CD8-positive, alpha-beta T cell (primary cell): ENCODE measurements at regions of chr1 and their contacts with region 1.

Region 1: GRCh38 chr1:207963427-207964194 is 52.7 kb upstream of the CD34 start:
- DNase-seq: peak; percentile 67 to 93 (median 82)
- ATAC-seq: peak; percentile 91
- H3K4me3 ChIP-seq: peak overlapping the region; percentile 71 to 92
- H3K4me3 Mint-ChIP-seq: peak overlapping the region; percentile 85
- H3K27ac ChIP-seq: peak overlapping the region; percentile 28 to 73
- H3K27ac Mint-ChIP-seq: peak overlapping the region; percentile 55
- H3K4me1 ChIP-seq: peaks cover 8% of the 10 kb centered on the region
- H3K4me1 Mint-ChIP-seq: peaks cover 12% of the 10 kb centered on the region
- H3K27me3 ChIP-seq: peaks cover 4 to 12% of the 10 kb centered on the region in 2 experiments
- H3K27me3 Mint-ChIP-seq: peaks cover 17% of the 10 kb centered on the region
- CTCF ChIP-seq: peak; percentile 99

Region 2: GRCh38 chr1:207811920-207812720 is 151.5 kb before region 1 on chr1:
- CTCF ChIA-PET with region 1: interaction called, 12 read pairs
- POLR2A ChIA-PET with region 1: no interaction called
- intact Hi-C with region 1: no loop called
- DNase-seq: peak in 2 of 9 experiments; percentile 9 to 46
- ATAC-seq: no peak
- H3K4me3 ChIP-seq: no peak overlapping the region
- H3K4me3 Mint-ChIP-seq: no peak overlapping the region
- H3K27ac ChIP-seq: no peak overlapping the region
- H3K27ac Mint-ChIP-seq: peak overlapping the region; percentile 69
- H3K4me1 ChIP-seq: peaks cover 41% of the 10 kb centered on the region
- H3K4me1 Mint-ChIP-seq: peaks cover 76% of the 10 kb centered on the region
- H3K27me3 ChIP-seq: no peaks in the 10 kb centered on the region
- H3K27me3 Mint-ChIP-seq: no peaks in the 10 kb centered on the region
- CTCF ChIP-seq: no peak

Region 3: GRCh38 chr1:207868774-207869721 is 94.6 kb before region 1 on chr1:
- CTCF ChIA-PET with region 1: interaction called, 14 read pairs
- POLR2A ChIA-PET with region 1: interaction called, 5 read pairs
- intact Hi-C with region 1: no loop called
- DNase-seq: peak; percentile 56 to 90 (median 68)
- ATAC-seq: peak; percentile 68
- H3K4me3 ChIP-seq: peak overlapping the region; percentile 66 to 87
- H3K4me3 Mint-ChIP-seq: peak overlapping the region; percentile 94
- H3K27ac ChIP-seq: peak overlapping the region; percentile 72 to 84
- H3K27ac Mint-ChIP-seq: peak overlapping the region; percentile 96
- H3K4me1 ChIP-seq: peaks cover 80% of the 10 kb centered on the region
- H3K4me1 Mint-ChIP-seq: peaks cover 90% of the 10 kb centered on the region
- H3K27me3 ChIP-seq: no peaks in the 10 kb centered on the region
- H3K27me3 Mint-ChIP-seq: no peaks in the 10 kb centered on the region
- CTCF ChIP-seq: peak; percentile 83

Region 4: GRCh38 chr1:207897188-207897587 is 66.4 kb before region 1 on chr1:
- CTCF ChIA-PET with region 1: interaction called, 12 read pairs
- POLR2A ChIA-PET with region 1: no interaction called
- intact Hi-C with region 1: loop called in 1 of 2 experiments (anchors 2 kb)
- DNase-seq: no peak
- ATAC-seq: no peak
- H3K4me3 ChIP-seq: no peak overlapping the region
- H3K4me3 Mint-ChIP-seq: no peak overlapping the region
- H3K27ac ChIP-seq: no peak overlapping the region
- H3K27ac Mint-ChIP-seq: no peak overlapping the region
- H3K4me1 ChIP-seq: no peaks in the 10 kb centered on the region
- H3K4me1 Mint-ChIP-seq: no peaks in the 10 kb centered on the region
- H3K27me3 ChIP-seq: no peaks in the 10 kb centered on the region
- H3K27me3 Mint-ChIP-seq: no peaks in the 10 kb centered on the region
- CTCF ChIP-seq: no peak

Region 5: DNA sequence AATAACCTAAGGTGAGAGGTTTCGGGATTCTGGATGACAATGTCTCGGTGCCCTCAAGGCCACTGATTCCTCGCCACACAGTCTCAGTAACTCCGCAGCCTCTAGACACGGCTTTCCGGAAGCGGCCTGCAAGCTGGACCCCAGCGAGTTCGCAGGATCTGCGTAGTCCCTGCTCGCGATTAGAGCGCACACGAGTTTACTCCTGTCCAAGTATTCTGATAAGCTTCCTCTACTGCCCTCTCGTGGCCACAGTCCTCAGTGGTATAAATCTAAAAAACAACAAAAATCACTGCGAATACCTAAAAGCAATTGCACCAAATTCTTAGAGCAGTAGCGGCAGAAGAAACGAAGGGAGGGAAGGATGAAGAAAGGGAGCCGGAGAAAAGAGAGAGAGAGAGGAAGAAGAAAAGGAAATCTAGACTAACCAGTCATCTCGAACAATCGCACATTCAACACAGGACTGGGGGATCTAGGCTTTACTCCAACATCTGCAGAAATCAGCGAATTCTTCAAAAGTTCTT is 281.6 kb after region 1 on chr1:
- CTCF ChIA-PET with region 1: no interaction called
- POLR2A ChIA-PET with region 1: no interaction called
- intact Hi-C with region 1: loop called in 1 of 2 experiments (anchors 1 kb)
- DNase-seq: peak; percentile 61 to 87 (median 77)
- ATAC-seq: peak; percentile 56
- H3K4me3 ChIP-seq: peak overlapping the region; percentile 71 to 78
- H3K4me3 Mint-ChIP-seq: peak overlapping the region; percentile 80
- H3K27ac ChIP-seq: peak overlapping the region; percentile 35 to 71
- H3K27ac Mint-ChIP-seq: peak overlapping the region; percentile 9
- H3K4me1 ChIP-seq: peaks cover 4% of the 10 kb centered on the region
- H3K4me1 Mint-ChIP-seq: peaks cover 6% of the 10 kb centered on the region
- H3K27me3 ChIP-seq: peaks cover 0 to 6% of the 10 kb centered on the region in 2 experiments
- H3K27me3 Mint-ChIP-seq: peaks cover 18% of the 10 kb centered on the region
- CTCF ChIP-seq: peak; percentile 76